PC-3 (cell line): ENCODE measurements at regions of chr10 and their contacts with region 1.

Region 1: DNA sequence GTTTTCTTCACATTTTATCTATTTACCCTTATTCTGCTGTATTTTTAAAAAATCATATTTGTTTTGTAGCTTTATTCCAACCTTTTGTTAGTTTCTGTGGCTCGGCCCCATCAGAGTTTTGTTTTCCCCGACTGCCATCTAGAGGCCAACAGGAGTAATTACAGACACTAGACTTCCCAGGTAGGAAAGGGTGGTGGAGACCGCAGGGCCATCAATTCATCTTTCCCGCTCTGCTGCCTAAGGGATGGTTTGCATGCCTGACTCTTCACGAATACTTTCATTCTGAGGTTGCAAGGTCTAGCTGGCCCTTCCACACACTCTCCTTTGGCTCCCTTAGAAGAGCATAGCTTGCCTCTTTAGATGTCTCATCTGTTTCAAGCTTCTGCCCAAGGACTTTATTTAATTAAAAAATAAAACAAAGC is 38.3 kb downstream of the LYZL2 start:
- DNase-seq: peak; percentile 61
- ATAC-seq: peak; percentile 63
- H3K4me3 ChIP-seq: no peak overlapping the region
- H3K27ac ChIP-seq: no peak overlapping the region
- H3K4me1 ChIP-seq: no peaks in the 10 kb centered on the region
- H3K27me3 ChIP-seq: no peaks in the 10 kb centered on the region
- CTCF ChIP-seq: peak; percentile 67

Region 2: DNA sequence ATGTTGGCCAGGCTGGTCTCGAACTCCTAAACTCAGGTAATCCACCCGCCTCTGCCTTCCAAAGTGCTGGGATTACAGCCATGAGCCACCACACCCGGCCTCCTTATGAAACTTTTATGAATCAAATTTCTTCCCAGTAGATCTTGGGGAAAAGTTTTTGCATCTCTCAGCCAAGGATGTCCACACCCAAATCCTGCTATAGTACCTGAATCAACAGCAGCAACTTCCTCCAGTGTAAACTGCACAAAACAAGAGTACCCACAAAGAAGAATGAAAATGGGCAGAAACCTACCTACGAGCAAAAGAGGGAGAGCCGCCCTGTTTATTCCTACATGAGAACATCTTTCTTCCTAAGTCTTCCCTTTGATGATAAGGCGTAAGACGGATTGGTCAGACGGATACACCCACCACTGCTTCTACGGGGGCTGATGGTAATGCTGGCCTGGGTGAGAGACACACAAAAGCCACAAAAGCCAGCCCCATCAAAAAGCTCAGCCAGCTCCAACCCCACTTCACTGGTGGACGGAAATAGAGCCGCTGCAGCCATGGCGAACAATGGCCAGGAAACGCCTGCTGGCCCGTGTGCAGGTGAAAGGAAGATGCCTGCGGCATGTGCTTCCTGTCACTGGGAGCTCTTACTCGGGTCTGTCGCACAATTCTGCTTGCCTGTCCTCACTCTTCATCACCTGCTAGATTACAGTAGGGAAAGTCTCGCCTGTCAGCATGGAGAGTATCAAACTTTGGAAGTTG is 542.3 kb before region 1 on chr10:
- CTCF ChIA-PET with region 1: no interaction called
- POLR2A ChIA-PET with region 1: no interaction called
- intact Hi-C with region 1: no loop called
- DNase-seq: no peak
- ATAC-seq: no peak
- H3K4me3 ChIP-seq: no peak overlapping the region
- H3K27ac ChIP-seq: no peak overlapping the region
- H3K4me1 ChIP-seq: peaks cover 11% of the 10 kb centered on the region
- H3K27me3 ChIP-seq: no peaks in the 10 kb centered on the region
- CTCF ChIP-seq: no peak

Region 3: DNA sequence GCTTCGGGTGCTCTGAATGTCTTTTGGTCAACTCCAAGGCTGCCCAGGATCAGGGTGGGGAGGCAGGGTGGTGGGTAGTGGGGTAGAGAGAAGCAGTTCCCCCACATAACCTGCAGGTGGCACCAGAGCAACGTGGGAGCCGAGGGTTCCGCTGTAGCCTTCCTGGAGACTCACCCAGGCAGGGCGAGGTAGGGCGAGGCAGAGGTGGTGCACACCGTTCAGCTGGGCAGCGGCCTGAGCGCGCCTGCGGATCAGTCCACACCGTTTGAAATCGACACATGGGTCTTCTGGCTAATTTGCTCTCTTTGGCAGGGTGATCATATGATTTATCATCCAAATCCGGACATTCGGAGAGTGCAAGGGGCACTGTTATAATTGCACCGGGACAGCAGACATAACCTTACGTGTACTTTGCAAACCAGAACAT is 198.7 kb before region 1 on chr10:
- CTCF ChIA-PET with region 1: interaction called, 11 read pairs
- POLR2A ChIA-PET with region 1: no interaction called
- intact Hi-C with region 1: loop called (anchors 1 kb)
- DNase-seq: peak; percentile 75
- ATAC-seq: peak; percentile 92
- H3K4me3 ChIP-seq: peak overlapping the region; percentile 57
- H3K27ac ChIP-seq: no peak overlapping the region
- H3K4me1 ChIP-seq: peaks cover 8% of the 10 kb centered on the region
- H3K27me3 ChIP-seq: no peaks in the 10 kb centered on the region
- CTCF ChIP-seq: peak; percentile 78

Region 4: DNA sequence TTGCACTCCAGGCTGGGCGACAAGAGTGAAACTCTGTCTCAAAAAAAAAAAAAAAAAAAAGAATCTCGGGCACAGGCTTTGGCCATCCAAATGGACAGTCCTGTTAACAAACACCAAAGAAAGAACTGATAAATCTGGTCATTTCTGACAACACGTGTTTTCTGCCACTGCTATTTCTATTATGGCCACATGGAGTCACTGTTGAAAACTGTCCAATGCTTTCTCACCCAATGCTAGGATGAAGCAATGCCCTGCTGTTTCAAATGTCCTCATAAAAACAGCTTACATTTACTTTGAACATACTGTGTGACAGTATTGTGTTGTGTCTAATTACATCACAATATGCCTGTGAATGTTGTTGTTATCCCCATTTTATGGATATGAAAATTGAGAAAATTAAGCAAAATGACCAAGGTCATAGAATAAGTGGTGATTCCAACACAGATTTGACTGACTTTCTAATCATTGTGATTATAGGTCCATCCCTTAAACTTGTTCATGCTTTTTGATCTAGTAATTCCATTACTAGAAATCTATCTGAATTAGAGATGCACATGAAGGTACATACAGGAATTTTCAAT is 177.2 kb before region 1 on chr10:
- CTCF ChIA-PET with region 1: no interaction called
- POLR2A ChIA-PET with region 1: no interaction called
- intact Hi-C with region 1: loop called (anchors 2 kb)
- DNase-seq: peak; percentile 73
- ATAC-seq: peak; percentile 51
- H3K4me3 ChIP-seq: no peak overlapping the region
- H3K27ac ChIP-seq: no peak overlapping the region
- H3K4me1 ChIP-seq: no peaks in the 10 kb centered on the region
- H3K27me3 ChIP-seq: no peaks in the 10 kb centered on the region
- CTCF ChIP-seq: peak; percentile 74

Region 5: DNA sequence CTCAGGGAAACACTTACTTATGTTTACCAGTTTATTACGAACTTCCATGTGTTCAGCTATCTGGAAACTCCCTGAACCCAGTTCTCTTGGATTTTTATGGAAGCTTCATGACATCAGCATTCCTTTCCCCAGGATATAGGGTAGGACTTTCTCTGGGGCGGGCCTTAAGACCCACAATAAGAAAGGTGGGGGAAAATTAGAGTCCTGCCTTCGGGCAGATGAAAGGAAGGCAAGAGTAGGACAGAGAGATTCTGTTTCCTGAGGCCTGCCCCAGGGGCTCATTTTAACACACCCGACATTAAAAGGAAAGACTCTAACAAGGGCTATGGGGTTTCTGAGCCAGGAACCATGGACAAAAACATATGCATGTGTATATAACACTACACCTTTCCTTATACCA is 71.6 kb before region 1 on chr10:
- CTCF ChIA-PET with region 1: no interaction called
- POLR2A ChIA-PET with region 1: no interaction called
- intact Hi-C with region 1: no loop called
- DNase-seq: no peak
- ATAC-seq: no peak
- H3K4me3 ChIP-seq: no peak overlapping the region
- H3K27ac ChIP-seq: no peak overlapping the region
- H3K4me1 ChIP-seq: no peaks in the 10 kb centered on the region
- H3K27me3 ChIP-seq: no peaks in the 10 kb centered on the region
- CTCF ChIP-seq: no peak